ENCODE measurements at regions of chr1 and their contacts with region 1.

Region 1: DNA sequence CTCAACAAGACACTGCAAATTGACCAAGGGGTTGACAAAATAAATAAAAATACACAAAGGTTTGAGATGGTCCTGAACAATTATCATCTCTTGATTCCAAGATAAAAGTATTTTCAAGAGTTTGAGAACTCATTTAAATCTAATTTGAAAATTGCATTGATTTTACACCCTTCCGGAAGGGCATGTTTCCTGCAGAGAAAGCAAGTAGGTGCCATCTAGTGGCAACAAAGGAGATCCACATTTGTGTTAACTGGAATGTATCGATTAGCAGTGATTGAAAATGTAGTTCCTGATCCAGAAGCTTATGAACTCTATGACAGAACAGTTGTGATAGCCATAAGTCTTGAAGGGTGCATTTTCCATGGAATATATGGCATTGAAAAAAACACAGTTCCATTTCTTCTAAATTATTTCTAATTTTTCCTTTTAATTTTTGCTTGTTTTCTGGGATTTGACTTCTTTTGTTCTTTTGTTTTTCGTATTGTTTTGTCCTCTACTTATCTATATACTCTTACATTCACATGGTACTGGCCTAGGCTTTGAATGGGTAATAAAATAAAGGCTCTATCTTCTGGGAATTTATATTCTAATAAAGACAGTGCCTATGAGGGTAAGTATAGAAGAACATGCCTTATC is 143.7 kb downstream of the DNM3 start:
- DNase-seq: no peak
- ATAC-seq: peak; percentile 63
- H3K4me3 ChIP-seq: no peak overlapping the region
- H3K27ac ChIP-seq: no peak overlapping the region
- H3K4me1 ChIP-seq: no peaks in the 10 kb centered on the region
- H3K27me3 ChIP-seq: no peaks in the 10 kb centered on the region
- CTCF ChIP-seq: peak; percentile 81

Region 2: DNA sequence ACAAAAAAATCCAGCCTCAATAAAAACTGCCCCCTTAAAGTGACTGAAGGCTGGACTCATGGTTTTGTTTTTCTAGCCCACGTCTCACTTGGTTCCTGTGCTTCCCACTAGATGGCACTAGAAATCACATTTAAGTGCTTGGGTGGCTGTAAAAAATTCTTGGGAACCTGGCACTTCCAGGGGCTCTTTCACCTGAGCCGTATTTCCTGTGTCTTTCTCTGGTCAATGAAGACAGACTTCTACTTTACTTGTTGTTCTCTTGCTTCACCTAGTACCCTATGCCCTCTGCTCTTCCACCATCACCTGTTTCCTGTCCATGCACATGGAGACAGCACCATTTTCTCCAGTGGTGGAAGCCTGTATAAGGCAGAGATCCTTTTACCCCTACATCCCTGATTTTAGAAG is 183.5 kb before region 1 on chr1:
- intact Hi-C with region 1: loop called (anchors 2 kb)
- DNase-seq: no peak
- ATAC-seq: peak; percentile 69
- H3K4me3 ChIP-seq: no peak overlapping the region
- H3K27ac ChIP-seq: no peak overlapping the region
- H3K4me1 ChIP-seq: peaks cover 12% of the 10 kb centered on the region
- H3K27me3 ChIP-seq: no peaks in the 10 kb centered on the region
- CTCF ChIP-seq: peak; percentile 79

Region 3: GRCh38 chr1:171850651-171851350 is 134.2 kb before region 1 on chr1:
- intact Hi-C with region 1: no loop called
- DNase-seq: no peak
- ATAC-seq: peak; percentile 22
- H3K4me3 ChIP-seq: no peak overlapping the region
- H3K27ac ChIP-seq: no peak overlapping the region
- H3K4me1 ChIP-seq: no peaks in the 10 kb centered on the region
- H3K27me3 ChIP-seq: no peaks in the 10 kb centered on the region
- CTCF ChIP-seq: no peak